ENCODE measurements at regions of chr6 and their contacts with region 1.

Region 1: DNA sequence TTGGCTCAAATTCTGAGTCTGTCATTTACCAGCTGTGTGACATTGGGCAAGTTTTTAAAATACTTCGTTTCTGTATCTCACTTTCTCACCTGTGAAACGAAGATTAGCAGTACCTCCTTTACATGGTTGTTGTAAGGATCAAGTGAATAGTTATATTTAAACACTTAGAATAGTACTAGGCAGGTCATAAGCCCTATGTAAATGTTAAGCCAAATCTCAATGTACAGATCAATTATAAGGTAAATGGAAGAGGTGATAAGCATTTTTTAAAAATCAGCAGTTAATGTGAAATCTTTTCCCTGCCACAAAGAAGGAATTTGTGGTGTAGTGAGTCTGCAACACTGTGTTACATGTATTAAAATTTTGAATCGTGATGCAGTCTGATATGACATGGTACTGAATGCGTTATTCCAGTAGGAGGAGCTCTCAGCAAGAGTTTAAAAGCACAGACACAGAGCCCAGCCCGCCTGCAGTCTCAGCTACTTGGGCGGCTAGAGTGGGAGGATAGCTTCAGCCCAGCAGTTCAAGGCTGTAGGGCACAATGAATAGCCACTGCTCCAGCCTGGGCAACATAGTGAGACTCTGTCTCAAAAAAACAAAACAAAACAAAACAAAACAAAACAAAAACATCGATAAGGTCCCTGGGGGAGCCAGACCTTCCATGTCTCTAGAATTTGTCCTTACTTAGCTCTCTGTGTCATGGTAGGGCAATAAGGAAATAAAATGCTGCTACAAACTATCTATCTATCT is 46.0 kb downstream of the GTF2H5 start:
- DNase-seq: no peak
- H3K4me3 ChIP-seq: no peak overlapping the region
- CTCF ChIP-seq: peak; percentile 70

Region 2: GRCh38 chr6:158198461-158198860 is 15.6 kb before region 1 on chr6:
- CTCF ChIA-PET with region 1: interaction called, 17 read pairs
- POLR2A ChIA-PET with region 1: no interaction called
- DNase-seq: no peak
- H3K4me3 ChIP-seq: no peak overlapping the region
- CTCF ChIP-seq: no peak

Region 3: GRCh38 chr6:158231551-158232315 is 17.6 kb after region 1 on chr6:
- CTCF ChIA-PET with region 1: interaction called, 10 read pairs
- POLR2A ChIA-PET with region 1: no interaction called
- DNase-seq: no peak
- H3K4me3 ChIP-seq: peak overlapping the region; percentile 73
- CTCF ChIP-seq: no peak

Region 4: DNA sequence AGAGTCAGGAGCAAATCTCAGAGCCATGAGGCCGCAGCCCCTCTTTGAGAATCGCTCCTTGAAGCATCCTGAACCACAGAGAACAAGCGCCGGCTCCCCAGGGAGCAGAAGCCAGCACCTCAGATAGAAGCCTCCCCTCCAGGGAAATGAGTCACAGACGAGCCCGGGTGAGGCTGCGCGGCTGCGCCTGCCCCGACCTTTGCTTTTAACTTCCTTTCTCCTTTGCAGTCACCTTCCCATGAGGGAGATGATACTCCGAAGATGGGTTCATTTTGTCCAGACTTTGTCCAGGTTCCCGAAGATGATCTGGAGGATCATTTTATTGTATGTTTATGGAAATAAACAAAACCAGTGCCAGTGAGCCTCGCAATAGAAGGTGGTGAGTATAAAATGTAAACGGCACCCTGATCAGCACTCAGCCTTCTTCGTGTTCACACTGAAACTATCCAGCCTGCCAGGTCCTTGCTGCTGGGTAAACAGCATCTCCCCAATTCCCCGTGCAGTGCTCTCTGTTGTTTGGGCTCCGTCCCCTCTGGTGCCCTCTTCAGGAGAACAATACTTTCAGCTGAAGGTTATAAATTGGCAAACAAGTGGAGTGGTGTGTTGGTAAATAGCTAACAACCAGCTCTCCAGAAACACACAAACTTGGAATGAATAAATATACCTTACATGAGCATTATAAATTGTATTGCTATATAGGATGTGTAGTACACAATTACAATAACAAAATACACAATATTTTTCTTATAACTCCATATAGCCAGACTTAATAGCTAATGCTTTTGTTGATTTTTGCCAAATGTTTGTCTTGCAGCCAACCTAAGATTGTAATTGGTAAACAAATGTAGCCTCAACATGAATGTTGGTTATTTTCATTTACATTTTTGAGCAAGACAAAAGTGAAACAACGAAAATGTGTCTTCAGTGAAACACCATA is 304.4 kb after region 1 on chr6:
- CTCF ChIA-PET with region 1: interaction called, 24 read pairs
- POLR2A ChIA-PET with region 1: no interaction called
- DNase-seq: no peak
- H3K4me3 ChIP-seq: peak overlapping the region; percentile 51
- CTCF ChIP-seq: peak; percentile 73

Region 5: DNA sequence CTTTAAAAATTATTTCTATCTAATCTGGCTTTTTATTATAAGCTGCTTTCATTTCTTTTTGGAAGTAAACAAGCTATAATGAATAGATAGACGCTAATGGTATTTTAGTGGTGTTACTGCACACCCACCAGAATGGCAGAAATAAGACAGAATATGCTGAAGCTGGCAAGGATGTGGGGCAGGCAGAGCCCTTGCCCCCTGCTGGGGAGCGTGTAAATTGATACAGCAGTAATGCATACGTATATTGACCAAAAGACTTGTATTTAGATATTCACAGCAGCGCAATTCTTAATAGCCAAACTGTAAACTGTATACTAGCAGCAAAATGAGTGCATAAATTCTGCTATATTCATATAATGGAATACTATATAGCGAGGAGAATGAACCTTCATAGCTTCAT is 381.1 kb after region 1 on chr6:
- CTCF ChIA-PET with region 1: interaction called, 257 read pairs
- POLR2A ChIA-PET with region 1: no interaction called
- DNase-seq: no peak
- H3K4me3 ChIP-seq: no peak overlapping the region
- CTCF ChIP-seq: peak; percentile 13

Measured in AG04449 (cell line).